ENCODE measurements at regions of chr13 and their contacts with region 1.

Region 1: GRCh38 chr13:57739089-57739488 is 107.5 kb downstream of the PCDH17 start:
- DNase-seq: no peak
- H3K4me3 ChIP-seq: peak overlapping the region in 1 of 59 donors; percentile 2
- H3K27ac ChIP-seq: peak overlapping the region in 21 of 59 donors; percentile 3 to 71 (median 32)
- H3K27me3 ChIP-seq: no peaks in the 10 kb centered on the region
- CTCF ChIP-seq: no peak

Region 2: DNA sequence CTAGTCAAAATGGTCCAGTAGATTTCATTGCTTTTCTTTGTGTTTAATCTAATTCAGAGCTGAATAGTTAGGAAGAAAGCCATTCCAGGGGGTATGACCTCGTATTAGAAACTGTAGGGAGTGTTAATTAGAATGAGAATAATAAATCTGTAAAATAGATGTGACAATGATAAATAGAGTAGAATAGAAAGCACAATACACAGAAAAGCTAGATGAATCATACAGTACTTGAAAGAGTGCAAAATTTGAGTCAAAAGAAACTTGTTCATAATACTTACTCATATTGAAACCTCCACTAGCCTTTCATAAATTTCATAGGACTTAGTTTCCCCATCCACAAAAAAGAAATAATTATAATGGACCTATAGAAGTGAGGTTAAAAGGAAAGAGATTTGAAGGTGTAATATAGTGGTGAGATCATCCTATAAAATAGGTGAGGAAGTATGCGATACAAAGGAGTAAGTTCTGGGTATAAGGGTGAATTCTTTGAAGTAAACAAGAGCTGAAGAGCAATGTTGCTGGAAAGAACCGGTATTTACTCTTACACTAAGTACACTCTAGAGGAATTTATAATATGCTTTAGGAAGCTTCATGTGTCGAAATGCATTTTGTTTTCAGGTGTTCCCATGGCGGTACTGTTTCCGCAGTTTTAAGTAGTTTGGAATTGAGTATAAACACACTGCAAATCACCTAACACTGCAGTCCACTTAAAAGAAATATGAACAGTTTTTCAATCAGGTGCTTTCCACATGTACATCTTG is 85.7 kb before region 1 on chr13:
- intact Hi-C with region 1: no loop called
- DNase-seq: no peak
- H3K4me3 ChIP-seq: peak overlapping the region in 1 of 59 donors; percentile 4
- H3K27ac ChIP-seq: peak overlapping the region in 10 of 59 donors; percentile 5 to 53 (median 26)
- H3K27me3 ChIP-seq: no peaks in the 10 kb centered on the region
- CTCF ChIP-seq: no peak

Region 3: GRCh38 chr13:57857945-57858344 is 118.9 kb after region 1 on chr13:
- intact Hi-C with region 1: loop called in 1 of 2 experiments (anchors 10 kb)
- DNase-seq: no peak
- H3K4me3 ChIP-seq: peak overlapping the region in 11 of 59 donors; percentile 0 to 40 (median 26)
- H3K27ac ChIP-seq: no peak overlapping the region
- H3K27me3 ChIP-seq: no peaks in the 10 kb centered on the region
- CTCF ChIP-seq: peak in 53 of 56 donors; percentile 28 to 77 (median 55)

Region 4: GRCh38 chr13:57874530-57874929 is 135.4 kb after region 1 on chr13:
- intact Hi-C with region 1: no loop called
- DNase-seq: no peak
- H3K4me3 ChIP-seq: no peak overlapping the region
- H3K27ac ChIP-seq: no peak overlapping the region
- H3K27me3 ChIP-seq: no peaks in the 10 kb centered on the region
- CTCF ChIP-seq: no peak

Measured in dorsolateral prefrontal cortex (tissue), 120 donors.